Right ventricle myocardium superior (tissue), 1 donor: ENCODE measurements at regions of chr9 and their contacts with region 1.

Region 1: GRCh38 chr9:38068866-38069629 is at the start of gene SHB:
- DNase-seq: peak; percentile 92
- ATAC-seq: peak; percentile 84
- total RNA-seq, gene SHB: 15.0 TPM

Region 2: GRCh38 chr9:37913480-37914153 is 155.4 kb before region 1 on chr9:
- intact Hi-C with region 1: loop called (anchors 5 kb)
- DNase-seq: peak; percentile 81
- ATAC-seq: peak; percentile 91

Region 3: DNA sequence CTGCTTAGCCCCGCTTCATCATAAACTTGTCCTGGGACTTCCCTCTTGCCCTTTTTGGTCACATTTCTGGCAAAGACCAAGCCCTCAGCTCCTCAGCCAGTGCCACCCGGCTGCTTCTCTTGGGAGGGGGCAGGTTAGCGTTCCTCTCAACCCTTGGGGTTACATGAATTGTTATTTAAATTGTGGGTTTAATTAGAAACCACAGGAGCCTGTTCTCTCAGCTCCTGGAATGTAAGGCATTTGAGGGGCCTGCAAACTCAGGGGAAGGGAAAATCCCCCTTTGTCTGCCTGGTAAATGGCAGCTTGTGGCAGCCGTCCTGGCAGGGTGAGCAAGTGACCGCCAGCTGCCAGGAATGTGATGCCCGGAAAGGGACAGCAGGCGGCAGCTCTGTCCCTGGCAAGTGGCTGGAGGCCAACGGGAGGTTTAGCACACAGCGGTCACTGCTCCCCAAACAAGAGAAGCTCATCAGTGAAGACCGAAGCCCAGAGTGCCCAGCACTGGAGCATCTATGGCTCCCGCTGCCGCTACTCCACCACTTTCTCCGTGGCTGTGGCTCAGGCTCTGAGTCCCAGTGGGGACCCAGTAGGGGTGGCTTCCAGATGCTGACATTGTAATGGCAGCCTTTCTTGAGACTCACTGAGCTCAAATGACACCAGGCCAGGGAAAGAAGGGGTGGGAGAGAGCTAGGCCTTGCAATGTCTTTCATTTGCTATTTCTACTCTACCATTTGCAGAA is 51.7 kb before region 1 on chr9:
- intact Hi-C with region 1: loop called (anchors 5 kb)
- DNase-seq: peak; percentile 77
- ATAC-seq: peak; percentile 87

Region 4: GRCh38 chr9:38032266-38033110 is 36.6 kb before region 1 on chr9:
- intact Hi-C with region 1: loop called (anchors 5 kb)
- DNase-seq: no peak
- ATAC-seq: peak; percentile 47

Region 5: GRCh38 chr9:38263532-38263931 is 194.5 kb after region 1 on chr9:
- intact Hi-C with region 1: no loop called
- DNase-seq: no peak
- ATAC-seq: no peak